Transverse colon (tissue), 4 donors: ENCODE measurements at regions of chr3 and their contacts with region 1.

Region 1: GRCh38 chr3:40191850-40192448 is 117.6 kb upstream of the EIF1B start:
- DNase-seq: peak; percentile 57
- H3K4me3 ChIP-seq: no peak overlapping the region
- H3K27ac ChIP-seq: no peak overlapping the region
- H3K4me1 ChIP-seq: no peaks in the 10 kb centered on the region
- H3K27me3 ChIP-seq: no peaks in the 10 kb centered on the region
- CTCF ChIP-seq: peak; percentile 83 to 96 (median 89)
- EP300 ChIP-seq: no peak
- POLR2A ChIP-seq: no peak

Region 2: GRCh38 chr3:40317061-40317855 is 125.3 kb after region 1 on chr3:
- in situ Hi-C with region 1: loop called (anchors 5 to 10 kb)
- intact Hi-C with region 1: loop called (anchors 5 kb)
- DNase-seq: peak; percentile 27
- H3K4me3 ChIP-seq: no peak overlapping the region
- H3K27ac ChIP-seq: no peak overlapping the region
- H3K4me1 ChIP-seq: peaks cover 0 to 24% (median 0%) of the 10 kb centered on the region in 4 donors
- H3K27me3 ChIP-seq: no peaks in the 10 kb centered on the region
- CTCF ChIP-seq: peak; percentile 78 to 88 (median 81)
- EP300 ChIP-seq: no peak
- POLR2A ChIP-seq: no peak